Naive thymus-derived CD4-positive, alpha-beta T cell (primary cell): ENCODE measurements at regions of chr14 and their contacts with region 1.

Region 1: GRCh38 chr14:105448706-105449111 is 25.9 kb upstream of the CRIP2 start:
- DNase-seq: peak; percentile 45 to 76 (median 63)
- ATAC-seq: peak; percentile 92
- H3K4me3 ChIP-seq: no peak overlapping the region
- H3K4me3 Mint-ChIP-seq: no peak overlapping the region
- H3K27ac ChIP-seq: no peak overlapping the region
- H3K27ac Mint-ChIP-seq: no peak overlapping the region
- H3K4me1 ChIP-seq: no peaks in the 10 kb centered on the region
- H3K4me1 Mint-ChIP-seq: peaks cover 0 to 3% (median 0%) of the 10 kb centered on the region in 7 donors
- H3K27me3 ChIP-seq: no peaks in the 10 kb centered on the region
- H3K27me3 Mint-ChIP-seq: no peaks in the 10 kb centered on the region

Region 2: DNA sequence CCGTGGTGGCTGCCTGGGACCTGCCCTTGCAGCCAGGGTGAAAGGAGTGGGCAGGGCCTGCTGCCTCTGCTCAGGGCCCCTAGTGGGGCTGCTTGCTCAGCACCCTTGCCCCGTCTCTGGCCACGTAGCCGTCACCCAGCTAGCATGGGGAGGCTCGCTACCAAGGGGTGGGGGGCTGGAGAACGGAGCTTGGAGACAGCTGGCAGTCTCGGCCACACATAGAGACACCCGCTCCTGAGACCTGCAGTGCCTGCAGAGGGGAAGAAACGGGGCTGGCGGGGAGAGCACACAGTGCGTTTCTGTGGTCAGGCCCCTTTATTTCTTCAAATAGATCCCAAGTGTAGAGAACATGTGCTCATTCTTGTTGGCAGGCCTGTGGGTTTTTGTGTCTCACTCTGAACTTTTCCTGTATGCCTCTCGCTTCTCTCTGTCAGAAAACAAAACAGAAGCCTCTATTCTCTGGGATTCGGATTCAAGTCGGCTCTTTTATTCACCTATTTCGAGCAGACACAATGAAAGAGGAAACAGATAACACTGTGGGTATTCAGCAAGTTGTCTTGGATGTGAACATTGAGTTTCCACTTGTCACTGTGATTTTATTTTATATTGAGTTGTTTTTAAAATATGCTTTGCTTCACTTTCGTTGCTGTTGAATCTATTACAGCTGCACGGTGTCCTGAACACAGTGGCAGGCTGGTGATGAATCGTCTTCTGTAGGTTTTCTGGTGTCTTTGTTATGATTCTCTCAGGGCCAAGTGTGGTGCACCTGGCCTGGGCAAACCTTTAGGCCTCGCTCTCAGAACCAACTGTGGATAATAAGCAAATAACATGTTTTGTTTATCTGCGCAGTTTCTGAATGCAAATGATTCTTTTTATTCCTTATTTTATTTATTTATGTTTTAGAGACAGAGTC is 107.6 kb before region 1 on chr14:
- CTCF ChIA-PET with region 1: no interaction called
- POLR2A ChIA-PET with region 1: no interaction called
- intact Hi-C with region 1: no loop called
- DNase-seq: no peak
- ATAC-seq: no peak
- H3K4me3 ChIP-seq: no peak overlapping the region
- H3K4me3 Mint-ChIP-seq: no peak overlapping the region
- H3K27ac ChIP-seq: no peak overlapping the region
- H3K27ac Mint-ChIP-seq: peak overlapping the region in 2 of 9 donors; percentile 40 to 54
- H3K4me1 ChIP-seq: no peaks in the 10 kb centered on the region
- H3K4me1 Mint-ChIP-seq: peaks cover 0 to 22% (median 12%) of the 10 kb centered on the region in 7 donors
- H3K27me3 ChIP-seq: no peaks in the 10 kb centered on the region
- H3K27me3 Mint-ChIP-seq: no peaks in the 10 kb centered on the region

Region 3: GRCh38 chr14:105368965-105369652 is 79.6 kb before region 1 on chr14:
- CTCF ChIA-PET with region 1: interaction called, 3 read pairs
- POLR2A ChIA-PET with region 1: no interaction called
- intact Hi-C with region 1: loop called (anchors 1 kb)
- DNase-seq: no peak
- ATAC-seq: no peak
- H3K4me3 ChIP-seq: no peak overlapping the region
- H3K4me3 Mint-ChIP-seq: no peak overlapping the region
- H3K27ac ChIP-seq: no peak overlapping the region
- H3K27ac Mint-ChIP-seq: no peak overlapping the region
- H3K4me1 ChIP-seq: peaks cover 7 to 9% of the 10 kb centered on the region in 2 donors
- H3K4me1 Mint-ChIP-seq: peaks cover 2 to 9% (median 5%) of the 10 kb centered on the region in 7 donors
- H3K27me3 ChIP-seq: no peaks in the 10 kb centered on the region
- H3K27me3 Mint-ChIP-seq: no peaks in the 10 kb centered on the region

Region 4: GRCh38 chr14:105375635-105376057 is 73.1 kb before region 1 on chr14:
- CTCF ChIA-PET with region 1: interaction called, 3 read pairs
- POLR2A ChIA-PET with region 1: no interaction called
- intact Hi-C with region 1: loop called (anchors 1 kb)
- DNase-seq: peak in 1 of 9 donors; percentile 44
- ATAC-seq: peak; percentile 68
- H3K4me3 ChIP-seq: no peak overlapping the region
- H3K4me3 Mint-ChIP-seq: peak overlapping the region in 2 of 10 donors; percentile 2 to 56
- H3K27ac ChIP-seq: no peak overlapping the region
- H3K27ac Mint-ChIP-seq: peak overlapping the region in 7 of 9 donors; percentile 3 to 90 (median 60)
- H3K4me1 ChIP-seq: no peaks in the 10 kb centered on the region
- H3K4me1 Mint-ChIP-seq: peaks cover 10 to 14% (median 12%) of the 10 kb centered on the region in 7 donors
- H3K27me3 ChIP-seq: no peaks in the 10 kb centered on the region
- H3K27me3 Mint-ChIP-seq: no peaks in the 10 kb centered on the region

Region 5: DNA sequence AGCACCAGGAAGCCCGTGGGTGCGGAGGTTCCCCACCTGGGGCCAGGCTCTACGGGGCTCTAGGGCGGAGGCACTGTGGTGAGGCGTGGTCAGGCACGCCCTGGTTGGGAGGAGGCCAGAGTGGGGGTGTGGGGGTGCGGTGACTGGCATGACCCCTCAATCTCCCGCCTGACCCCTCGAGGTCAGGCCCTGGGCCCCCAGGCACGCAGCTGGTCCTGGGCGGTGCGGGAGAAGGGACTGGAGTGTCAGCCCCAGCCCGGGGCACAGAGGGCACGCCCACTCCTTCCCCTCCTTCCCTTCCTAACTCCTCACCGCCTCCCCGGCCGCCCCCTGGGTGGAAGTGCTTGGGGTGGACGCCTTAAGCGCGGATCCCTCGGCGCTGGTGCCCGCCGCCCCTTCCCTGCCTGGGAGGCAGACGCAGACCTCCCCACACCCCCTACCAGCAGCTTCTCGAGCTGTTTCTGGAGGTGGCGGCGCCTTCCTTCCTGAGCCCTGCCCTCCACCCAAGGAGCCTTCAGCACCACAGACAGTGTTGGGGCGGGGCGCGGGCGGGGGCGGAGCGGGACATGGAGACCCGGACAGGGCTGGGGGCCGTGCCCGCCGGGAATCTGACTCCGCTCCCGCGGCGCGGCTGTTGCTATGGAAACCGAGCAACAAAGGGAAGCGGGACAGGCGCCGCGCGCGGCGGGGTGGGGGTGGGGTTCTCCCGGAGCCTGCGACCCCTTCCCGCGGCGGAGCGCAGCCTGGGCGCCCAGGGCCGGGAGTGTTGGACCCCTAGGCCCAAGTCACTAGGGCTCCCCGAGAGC is 25.2 kb after region 1 on chr14:
- CTCF ChIA-PET with region 1: no interaction called
- POLR2A ChIA-PET with region 1: no interaction called
- intact Hi-C with region 1: loop called (anchors 1 to 2 kb)
- DNase-seq: peak in 7 of 9 donors; percentile 55 to 83 (median 61)
- ATAC-seq: peak; percentile 71
- H3K4me3 ChIP-seq: peak overlapping the region; percentile 26
- H3K4me3 Mint-ChIP-seq: peak overlapping the region; percentile 64 to 83 (median 75)
- H3K27ac ChIP-seq: peak overlapping the region; percentile 45
- H3K27ac Mint-ChIP-seq: peak overlapping the region in 2 of 9 donors; percentile 19 to 23
- H3K4me1 ChIP-seq: peaks cover 7 to 34% of the 10 kb centered on the region in 2 donors
- H3K4me1 Mint-ChIP-seq: peaks cover 5 to 12% (median 7%) of the 10 kb centered on the region in 7 donors
- H3K27me3 ChIP-seq: no peaks in the 10 kb centered on the region
- H3K27me3 Mint-ChIP-seq: peaks cover 0 to 24% (median 0%) of the 10 kb centered on the region in 5 donors